ENCODE measurements at regions of chr3 and their contacts with region 1.

Region 1: GRCh38 chr3:53949541-53949940 is 57.9 kb upstream of the SELENOK start:
- DNase-seq: no peak
- H3K4me3 ChIP-seq: no peak overlapping the region
- H3K27ac ChIP-seq: no peak overlapping the region
- H3K4me1 ChIP-seq: no peaks in the 10 kb centered on the region
- H3K27me3 ChIP-seq: peaks cover 5% of the 10 kb centered on the region; the same call in 1 of the 2 replicates
- CTCF ChIP-seq: no peak

Region 2: DNA sequence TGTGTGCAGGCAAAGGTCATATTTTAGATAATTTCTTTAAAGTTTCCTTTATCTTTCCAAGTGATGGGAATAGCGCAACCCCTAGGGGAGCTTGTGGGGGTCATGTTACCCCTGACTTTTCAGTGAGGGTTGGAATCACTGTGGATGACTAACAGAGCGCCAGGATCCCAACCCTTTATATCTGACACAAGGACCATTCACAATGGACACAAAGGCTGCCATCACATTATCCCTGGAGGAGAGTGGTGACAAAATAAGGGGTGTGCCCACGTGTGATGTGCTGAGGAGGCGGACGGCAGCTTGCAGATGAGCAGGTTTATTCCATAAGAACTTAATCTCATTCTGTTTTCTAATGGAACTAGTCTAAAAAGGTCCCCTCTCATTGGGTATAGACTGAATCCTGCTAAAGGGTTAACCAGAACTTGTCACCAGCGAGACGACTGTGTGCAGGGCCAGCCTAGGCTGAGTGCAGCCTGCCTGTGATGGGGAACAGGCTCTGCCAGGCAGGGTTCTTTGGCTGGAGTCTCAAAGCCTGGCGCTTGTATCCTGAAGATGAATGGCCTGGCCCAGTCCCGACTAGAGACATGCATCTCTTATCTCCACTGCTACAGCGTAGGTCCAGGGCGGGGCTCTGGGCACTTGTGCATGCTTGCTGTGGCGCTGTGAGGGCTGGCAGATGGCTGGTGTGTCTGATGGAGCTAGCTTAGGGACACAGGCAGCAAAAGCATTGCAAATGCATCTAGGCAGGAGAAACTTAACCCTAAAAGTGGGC is 153.6 kb before region 1 on chr3:
- CTCF ChIA-PET with region 1: no interaction called
- POLR2A ChIA-PET with region 1: no interaction called
- intact Hi-C with region 1: no loop called
- DNase-seq: no peak
- H3K4me3 ChIP-seq: no peak overlapping the region
- H3K27ac ChIP-seq: no peak overlapping the region
- H3K4me1 ChIP-seq: no peaks in the 10 kb centered on the region
- H3K27me3 ChIP-seq: peaks cover 92% of the 10 kb centered on the region
- CTCF ChIP-seq: no peak

Region 3: GRCh38 chr3:54062546-54062945 is 113.0 kb after region 1 on chr3:
- CTCF ChIA-PET with region 1: no interaction called
- POLR2A ChIA-PET with region 1: interaction called, 10 read pairs
- intact Hi-C with region 1: no loop called
- DNase-seq: no peak
- H3K4me3 ChIP-seq: no peak overlapping the region
- H3K27ac ChIP-seq: no peak overlapping the region
- H3K4me1 ChIP-seq: no peaks in the 10 kb centered on the region
- H3K27me3 ChIP-seq: peaks cover 13% of the 10 kb centered on the region; the same call in 1 of the 2 replicates
- CTCF ChIP-seq: no peak